ENCODE measurements at regions of chr13 and their contacts with region 1.

Region 1: DNA sequence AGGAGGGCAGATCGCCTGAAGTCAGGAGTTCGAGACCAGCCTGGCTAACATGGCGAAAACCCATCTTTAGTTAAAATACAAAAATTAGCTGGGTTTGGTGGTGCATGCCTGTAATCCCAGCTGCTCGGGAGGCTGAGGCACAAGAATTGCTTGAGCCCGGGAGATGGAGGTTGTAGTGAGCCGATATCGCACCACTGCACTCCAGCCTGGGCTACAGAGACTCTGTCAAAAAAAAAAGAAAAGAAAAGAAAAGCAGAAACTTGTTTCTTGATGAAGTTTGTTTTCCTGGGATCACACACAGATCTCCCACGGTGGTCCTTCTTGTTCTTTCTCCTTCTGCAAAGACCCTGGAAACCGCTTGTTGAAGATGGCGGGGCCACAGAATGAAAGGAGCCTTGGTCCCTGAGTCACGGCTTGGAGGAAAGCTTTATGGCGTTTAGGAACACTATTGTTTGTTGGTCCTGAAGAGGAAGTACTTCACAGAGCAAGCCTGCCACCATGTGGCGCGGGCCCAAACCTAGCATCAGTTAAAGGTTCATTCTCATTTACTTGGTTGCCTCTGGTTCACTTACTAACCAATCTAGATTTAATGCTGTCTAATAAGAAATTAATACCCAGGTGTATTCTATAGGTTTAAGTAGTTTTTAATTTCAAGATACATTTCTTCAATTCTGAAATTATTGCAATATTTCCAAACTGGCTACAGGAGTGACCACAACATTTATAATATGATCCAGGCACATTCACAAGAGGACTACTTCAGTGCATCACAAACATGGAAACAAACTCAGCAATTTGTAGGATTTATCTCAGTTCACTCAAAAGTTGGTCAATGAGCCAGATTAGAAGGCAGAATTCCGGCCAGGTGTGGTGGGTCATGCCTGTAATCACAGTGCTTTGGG is 21.3 kb upstream of the ARL11 start:
- DNase-seq: peak; percentile 75
- H3K4me3 ChIP-seq: peak overlapping the region in 2 of 3 experiments; percentile 17 to 22
- H3K27ac ChIP-seq: no peak overlapping the region
- H3K4me1 ChIP-seq: no peaks in the 10 kb centered on the region
- H3K27me3 ChIP-seq: no peaks in the 10 kb centered on the region
- CTCF ChIP-seq: peak; percentile 82 to 95

Region 2: GRCh38 chr13:49240017-49240416 is 367.0 kb before region 1 on chr13:
- CTCF ChIA-PET with region 1: no interaction called
- dilution Hi-C with region 1: no loop called
- in situ Hi-C with region 1: no loop called
- intact Hi-C with region 1: loop called (anchors 1 kb)
- DNase-seq: peak; percentile 39
- H3K4me3 ChIP-seq: no peak overlapping the region
- H3K27ac ChIP-seq: no peak overlapping the region
- H3K4me1 ChIP-seq: no peaks in the 10 kb centered on the region
- H3K27me3 ChIP-seq: no peaks in the 10 kb centered on the region
- CTCF ChIP-seq: peak; percentile 57 to 70

Region 3: DNA sequence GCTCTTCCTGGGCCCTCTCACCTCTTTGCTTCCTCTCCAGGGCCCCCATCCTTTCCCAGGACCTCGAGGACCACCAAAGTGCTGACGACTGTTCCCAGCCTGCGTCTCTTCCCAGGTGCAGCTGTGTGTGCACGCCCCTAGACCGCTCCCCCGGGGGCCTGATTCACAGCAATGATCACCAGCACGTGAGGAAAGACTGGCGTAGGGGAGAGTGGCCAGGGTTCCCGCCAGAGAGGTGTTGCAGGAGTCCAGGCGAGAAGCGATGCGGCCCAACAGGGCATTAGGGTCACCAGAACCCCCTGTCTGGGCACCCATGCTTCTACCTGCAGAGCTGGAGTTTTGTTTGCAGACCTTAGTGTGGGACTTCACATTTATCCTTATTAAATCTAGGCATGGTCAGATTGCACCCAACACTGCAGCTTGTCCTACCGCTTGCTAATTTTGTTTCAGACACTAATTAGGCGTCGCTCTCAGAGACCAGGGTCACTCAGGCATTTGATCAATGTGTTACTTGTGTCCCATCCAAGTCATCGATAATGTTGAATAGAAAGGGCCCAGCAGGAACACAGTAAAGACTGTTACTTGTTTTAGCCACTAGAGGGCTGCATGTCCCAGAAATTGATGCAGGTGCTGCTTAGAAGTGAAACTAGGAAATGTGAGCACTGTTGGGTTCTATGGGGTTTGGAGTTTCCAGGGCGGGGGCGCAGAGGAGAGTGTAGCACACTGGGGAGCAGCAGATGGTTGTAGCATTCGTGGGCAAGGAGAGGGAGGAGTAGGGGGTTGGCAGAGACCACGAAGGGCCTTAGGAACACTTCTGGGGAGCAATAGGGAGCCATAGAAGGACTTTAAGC is 306.0 kb before region 1 on chr13:
- CTCF ChIA-PET with region 1: no interaction called
- dilution Hi-C with region 1: no loop called
- in situ Hi-C with region 1: loop called (anchors 5 kb)
- intact Hi-C with region 1: loop called (anchors 1 kb)
- DNase-seq: peak; percentile 70
- H3K4me3 ChIP-seq: no peak overlapping the region
- H3K27ac ChIP-seq: no peak overlapping the region
- H3K4me1 ChIP-seq: peaks cover 20% of the 10 kb centered on the region
- H3K27me3 ChIP-seq: no peaks in the 10 kb centered on the region
- CTCF ChIP-seq: peak; percentile 86 to 93

Region 4: DNA sequence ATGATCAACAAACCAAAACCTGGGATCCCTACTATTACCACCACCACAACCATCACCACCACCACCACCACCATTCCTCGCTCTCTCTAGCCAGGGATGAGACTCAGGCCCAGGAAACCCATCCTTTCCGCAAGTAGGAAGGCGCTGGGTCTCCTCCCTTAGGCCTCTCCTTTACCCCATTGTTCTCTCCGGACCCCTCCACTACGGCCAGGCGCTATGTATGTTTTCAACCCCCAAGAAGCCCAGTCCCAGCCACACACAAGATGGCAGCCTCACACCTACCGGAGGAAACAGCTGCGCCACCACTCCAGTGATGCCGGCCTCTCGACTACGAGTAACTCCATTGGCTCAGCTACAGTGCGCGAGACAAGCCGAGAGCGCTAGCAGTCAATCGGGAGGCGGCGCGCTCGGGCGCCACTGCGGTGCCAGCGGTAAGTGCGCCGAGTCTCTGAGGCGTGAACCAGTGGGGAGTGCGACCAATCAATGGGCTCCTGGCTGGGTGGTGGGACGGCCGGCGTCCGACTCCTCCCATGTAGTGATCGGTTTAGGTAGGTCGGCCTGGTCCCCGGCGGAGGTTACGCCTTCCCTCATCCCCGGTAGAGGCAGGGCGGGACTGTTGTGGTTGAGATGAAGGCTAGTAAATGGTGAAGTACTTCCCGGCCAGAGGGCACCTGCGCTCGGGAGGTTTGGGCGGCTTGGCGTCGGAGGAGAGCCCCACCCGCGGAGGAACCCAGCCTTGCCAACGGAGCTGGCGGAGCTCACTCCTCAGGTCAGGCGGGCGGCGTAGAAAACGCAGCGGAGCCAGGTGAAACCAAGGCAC is 163.1 kb before region 1 on chr13 and contains the starts of genes CAB39L and SETDB2:
- CTCF ChIA-PET with region 1: interaction called, 9 read pairs
- dilution Hi-C with region 1: no loop called
- in situ Hi-C with region 1: loop called in 1 of 2 experiments (anchors 10 kb)
- intact Hi-C with region 1: loop called (anchors 1 kb)
- DNase-seq: peak; percentile 100
- H3K4me3 ChIP-seq: peak within 1 kb of the TSS; percentile 69 to 95 (median 70)
- H3K27ac ChIP-seq: peak within 1 kb of the TSS; percentile 72
- H3K4me1 ChIP-seq: peaks cover 2% of the 10 kb centered on the region
- H3K27me3 ChIP-seq: no peaks in the 10 kb centered on the region
- CTCF ChIP-seq: peak; percentile 22 to 55
- total RNA-seq, gene CAB39L: 5.7 to 8.0 TPM
- total RNA-seq, gene SETDB2: 8.1 to 10.2 TPM

Region 5: GRCh38 chr13:49495783-49496762 is 110.9 kb before region 1 on chr13 and contains the start of gene PHF11:
- CTCF ChIA-PET with region 1: no interaction called
- dilution Hi-C with region 1: no loop called
- in situ Hi-C with region 1: no loop called
- intact Hi-C with region 1: loop called (anchors 5 kb)
- DNase-seq: peak; percentile 79
- H3K4me3 ChIP-seq: peak within 1 kb of the TSS; percentile 57 to 76 (median 57)
- H3K27ac ChIP-seq: peak within 1 kb of the TSS; percentile 66
- H3K4me1 ChIP-seq: peaks cover 27% of the 10 kb centered on the region
- H3K27me3 ChIP-seq: no peaks in the 10 kb centered on the region
- CTCF ChIP-seq: peak in 1 of 2 donors; percentile 12
- total RNA-seq, gene PHF11: 7.7 to 25.5 TPM

Region 6: DNA sequence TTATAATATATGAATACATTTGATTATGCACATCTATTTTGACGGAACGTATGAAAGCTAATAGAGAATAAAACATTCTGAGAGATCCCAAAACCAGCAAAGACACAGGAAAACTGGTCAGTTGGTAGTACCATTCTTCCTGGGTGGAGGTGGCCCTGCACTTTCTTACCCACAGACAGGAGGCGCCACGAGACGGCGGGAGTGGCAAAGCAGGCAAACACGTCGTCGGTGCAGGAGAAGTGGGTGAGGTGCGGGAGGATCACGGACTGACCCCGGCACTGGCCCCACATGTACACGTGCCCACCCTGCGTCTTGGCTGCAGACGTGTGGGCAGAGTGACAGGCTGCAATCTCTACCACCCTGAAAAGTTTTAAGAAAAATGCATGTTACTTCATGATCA is 57.7 kb before region 1 on chr13:
- CTCF ChIA-PET with region 1: no interaction called
- dilution Hi-C with region 1: loop called (anchors 5 kb)
- in situ Hi-C with region 1: no loop called
- intact Hi-C with region 1: loop called (anchors 5 kb)
- DNase-seq: no peak
- H3K4me3 ChIP-seq: no peak overlapping the region
- H3K27ac ChIP-seq: no peak overlapping the region
- H3K4me1 ChIP-seq: no peaks in the 10 kb centered on the region
- H3K27me3 ChIP-seq: no peaks in the 10 kb centered on the region
- CTCF ChIP-seq: peak in 1 of 2 donors; percentile 37

Region 7: GRCh38 chr13:49560270-49561050 is 46.5 kb before region 1 on chr13:
- CTCF ChIA-PET with region 1: no interaction called
- dilution Hi-C with region 1: no loop called
- in situ Hi-C with region 1: no loop called
- intact Hi-C with region 1: loop called (anchors 1 kb)
- DNase-seq: peak; percentile 53
- H3K4me3 ChIP-seq: no peak overlapping the region
- H3K27ac ChIP-seq: no peak overlapping the region
- H3K4me1 ChIP-seq: peaks cover 8% of the 10 kb centered on the region
- H3K27me3 ChIP-seq: no peaks in the 10 kb centered on the region
- CTCF ChIP-seq: peak; percentile 11 to 30